Common myeloid progenitor, CD34-positive (primary cell): ENCODE measurements at regions of chr11 and their contacts with region 1.

Region 1: DNA sequence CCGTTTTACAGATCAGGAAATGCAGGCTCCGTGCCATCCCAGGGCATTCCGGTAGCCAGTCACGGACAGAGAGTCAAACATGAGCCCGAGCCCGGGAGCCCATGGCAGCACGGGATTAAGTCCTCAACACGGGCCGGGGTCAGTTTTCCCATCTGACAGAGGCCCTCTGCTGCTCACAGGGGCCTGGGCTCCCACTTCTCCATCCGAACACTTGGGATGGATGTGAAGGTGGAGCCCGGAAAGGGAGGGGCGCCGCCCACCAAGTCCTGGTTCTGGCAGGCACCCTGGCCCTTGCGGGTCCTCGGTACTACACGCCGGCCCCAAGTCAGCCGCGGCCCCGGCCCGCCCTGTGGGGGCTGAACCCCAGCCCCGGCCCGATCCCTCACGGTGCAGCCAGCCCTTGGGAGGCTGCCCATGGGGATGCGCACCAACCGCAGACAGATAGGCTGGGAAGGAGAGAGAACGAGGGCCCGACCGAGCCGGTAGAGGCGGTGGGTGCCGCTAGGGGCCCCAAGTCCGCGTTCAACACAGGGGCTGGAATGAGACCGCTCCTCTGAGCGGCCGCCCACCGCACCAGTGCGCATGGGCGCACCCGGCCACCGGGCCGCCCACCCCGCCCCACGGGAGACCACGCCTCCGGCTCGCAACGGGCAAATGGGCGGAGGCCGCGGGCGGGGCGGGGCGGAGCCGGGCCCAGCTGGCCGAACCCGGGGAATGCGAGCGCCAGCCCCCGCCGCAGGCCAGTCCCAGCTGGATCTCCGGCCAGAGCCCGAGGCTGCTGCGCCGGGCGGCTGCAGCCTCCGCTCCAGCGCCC is at the start of gene CAPN5:
- DNase-seq: peak; percentile 89 to 94 (median 92)
- H3K4me3 ChIP-seq: peak within 1 kb of the TSS; percentile 69 to 85 (median 70)
- H3K27ac ChIP-seq: no peak within 1 kb of the TSS
- H3K4me1 ChIP-seq: peaks cover 4 to 14% (median 11%) of the 10 kb centered on the region in 4 experiments
- H3K27me3 ChIP-seq: peaks cover 0 to 8% (median 4%) of the 10 kb centered on the region in 5 experiments

Region 2: DNA sequence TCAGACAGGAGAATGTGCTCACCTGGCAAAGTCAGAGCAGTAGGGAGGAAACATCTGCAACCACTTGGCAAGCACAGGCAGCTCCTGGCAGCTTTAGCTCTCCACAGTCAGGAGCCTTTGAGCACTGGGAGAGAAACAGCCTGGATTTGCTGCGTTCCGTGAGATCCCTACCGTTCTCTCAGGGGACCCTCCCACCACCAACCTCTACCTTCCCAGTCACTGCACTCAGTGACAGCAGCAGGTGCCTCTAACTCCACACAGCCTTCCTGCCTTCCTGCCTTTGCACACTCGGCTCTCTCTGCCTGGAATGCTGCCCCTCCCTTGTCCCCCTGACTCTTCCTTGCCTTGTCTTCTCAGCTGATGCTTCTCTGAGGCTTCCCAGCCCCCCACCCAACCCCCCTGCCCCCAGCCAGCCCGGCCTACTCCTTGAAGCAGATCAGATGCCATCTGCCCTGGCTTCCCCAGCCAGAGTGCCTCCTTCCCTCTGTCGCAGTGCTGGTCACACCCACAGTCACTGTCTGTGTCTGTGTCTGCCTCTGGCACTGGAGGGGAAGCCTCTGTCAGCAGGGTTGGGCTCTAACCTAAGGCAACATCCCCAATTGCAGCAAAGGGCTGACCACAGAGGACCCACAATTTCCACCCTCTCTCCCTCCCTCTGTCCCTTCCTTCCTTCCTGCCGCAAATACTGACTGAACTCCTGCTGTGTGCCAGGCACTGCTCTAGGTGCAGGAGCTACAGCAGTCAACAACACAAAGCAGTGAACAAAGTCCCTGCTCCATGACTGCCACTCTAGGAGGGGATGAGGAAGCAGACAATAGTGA is 298.1 kb before region 1 on chr11:
- CTCF ChIA-PET with region 1: no interaction called
- POLR2A ChIA-PET with region 1: no interaction called
- DNase-seq: peak; percentile 54 to 88 (median 86)
- H3K4me3 ChIP-seq: peak overlapping the region in 4 of 7 experiments; percentile 11 to 56 (median 16)
- H3K27ac ChIP-seq: no peak overlapping the region
- H3K4me1 ChIP-seq: peaks cover 5 to 38% (median 30%) of the 10 kb centered on the region in 4 experiments
- H3K27me3 ChIP-seq: peaks cover 0 to 8% (median 0%) of the 10 kb centered on the region in 5 experiments

Region 3: DNA sequence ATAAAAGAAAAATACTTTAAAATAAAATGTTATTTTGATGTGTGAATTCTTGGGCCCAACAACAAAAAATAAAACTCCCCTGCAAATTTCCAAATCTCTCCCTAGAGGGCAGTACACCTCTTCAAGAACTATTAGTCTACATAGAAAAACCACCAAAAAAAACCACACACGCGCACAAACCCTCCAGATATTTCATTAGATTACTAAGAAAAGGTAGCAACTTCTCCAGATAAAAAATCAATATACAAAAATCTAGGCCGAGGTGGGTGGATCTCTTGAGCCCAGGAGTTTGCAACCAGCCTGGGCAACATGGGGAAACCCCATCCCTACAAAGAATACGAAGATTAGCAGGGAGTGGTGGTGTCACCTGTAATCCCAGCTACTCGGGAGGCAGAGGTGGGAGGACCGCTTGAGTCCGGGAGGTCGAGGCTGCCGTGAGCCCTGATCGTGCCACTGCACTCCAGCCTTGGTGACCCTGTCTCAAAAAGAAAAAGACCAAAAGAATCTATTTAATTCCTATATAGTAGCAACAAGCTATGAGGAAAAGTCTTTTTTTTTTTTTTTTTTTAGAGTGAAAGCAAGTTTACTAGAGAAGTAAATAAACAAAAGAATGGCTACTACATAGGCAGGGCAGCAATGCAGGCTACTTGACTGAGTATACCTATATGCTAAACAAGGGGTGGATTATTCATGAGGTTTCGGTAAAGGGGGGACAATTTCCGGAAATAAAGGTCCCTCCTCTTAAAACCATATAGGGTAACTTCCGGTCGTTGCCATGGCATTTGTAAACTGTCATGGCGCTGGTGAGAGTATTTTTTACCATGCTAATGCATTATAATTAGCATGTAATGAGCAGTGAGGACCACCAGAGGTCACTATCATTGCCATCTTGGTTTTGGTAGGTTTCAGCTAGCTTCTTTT is 19.2 kb before region 1 on chr11:
- CTCF ChIA-PET with region 1: interaction called, 29 read pairs
- POLR2A ChIA-PET with region 1: no interaction called
- DNase-seq: peak; percentile 96 to 98 (median 98)
- H3K4me3 ChIP-seq: peak overlapping the region in 6 of 7 experiments; percentile 49 to 82 (median 64)
- H3K27ac ChIP-seq: no peak overlapping the region
- H3K4me1 ChIP-seq: peaks cover 0 to 13% (median 7%) of the 10 kb centered on the region in 4 experiments
- H3K27me3 ChIP-seq: peaks cover 0 to 14% (median 6%) of the 10 kb centered on the region in 5 experiments

Region 4: GRCh38 chr11:77053217-77054015 is 13.0 kb before region 1 on chr11:
- CTCF ChIA-PET with region 1: interaction called, 29 read pairs
- POLR2A ChIA-PET with region 1: no interaction called
- DNase-seq: no peak
- H3K4me3 ChIP-seq: no peak overlapping the region
- H3K27ac ChIP-seq: no peak overlapping the region
- H3K4me1 ChIP-seq: no peaks in the 10 kb centered on the region
- H3K27me3 ChIP-seq: peaks cover 0 to 5% (median 0%) of the 10 kb centered on the region in 5 experiments

Region 5: DNA sequence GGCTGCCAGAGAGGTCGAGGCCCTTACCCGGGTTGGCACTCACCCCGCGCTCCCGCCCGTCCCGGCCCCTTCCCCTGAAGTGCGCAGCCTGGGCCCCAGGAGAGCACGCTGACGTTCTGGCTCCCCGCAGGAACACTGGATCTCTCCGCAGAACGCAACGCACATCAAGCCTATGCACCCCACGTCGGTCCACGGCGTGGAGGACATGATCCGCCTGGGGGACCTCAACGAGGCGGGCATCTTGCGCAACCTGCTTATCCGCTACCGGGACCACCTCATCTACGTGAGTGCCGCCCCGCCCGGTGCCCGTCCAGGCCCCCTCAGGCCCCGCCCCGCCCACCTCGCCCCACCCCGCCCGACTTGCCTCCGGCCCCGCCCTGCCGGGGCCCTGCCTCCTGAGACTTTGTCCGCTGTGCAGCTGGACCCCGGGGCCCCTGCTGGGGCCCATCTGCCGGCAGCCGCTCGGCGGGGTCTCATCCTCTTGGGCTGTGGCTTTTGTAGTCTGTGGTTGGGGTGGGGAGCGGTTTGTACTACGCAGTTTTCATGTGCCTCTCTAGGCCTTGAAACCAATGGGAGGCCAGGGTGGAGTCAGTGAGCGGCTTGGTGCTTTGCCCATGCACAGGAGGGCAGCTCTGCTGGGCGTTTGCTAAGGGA is 81.4 kb after region 1 on chr11:
- CTCF ChIA-PET with region 1: no interaction called
- POLR2A ChIA-PET with region 1: no interaction called
- DNase-seq: peak; percentile 64 to 91 (median 90)
- H3K4me3 ChIP-seq: peak overlapping the region in 3 of 7 experiments; percentile 40 to 65 (median 52)
- H3K27ac ChIP-seq: no peak overlapping the region
- H3K4me1 ChIP-seq: peaks cover 11 to 51% (median 43%) of the 10 kb centered on the region in 4 experiments
- H3K27me3 ChIP-seq: peaks cover 0 to 10% (median 0%) of the 10 kb centered on the region in 5 experiments